A673 (cell line): ENCODE measurements at regions of chr4 and their contacts with region 1.

Region 1: DNA sequence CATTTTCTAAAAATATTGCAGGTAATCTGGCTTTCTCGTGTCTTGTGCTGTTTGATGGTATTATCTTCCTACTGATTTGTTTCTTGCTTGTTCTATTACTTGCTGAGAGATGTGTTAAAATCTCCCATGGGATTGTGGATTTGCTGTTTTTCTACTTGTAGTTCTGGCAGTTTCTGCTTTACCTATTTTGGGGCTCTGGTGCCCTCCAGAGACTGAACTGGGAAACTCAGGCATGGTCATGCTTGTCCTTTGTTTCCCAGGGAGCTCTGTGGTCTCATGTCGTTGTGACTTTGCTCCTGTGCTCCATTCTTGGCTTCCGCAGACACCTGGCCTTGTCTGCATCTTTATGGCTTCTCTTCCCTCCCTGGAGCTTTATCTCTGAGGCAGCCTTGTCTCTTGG is 39.5 kb downstream of the NSD2 start:
- DNase-seq: peak; percentile 80
- H3K4me3 ChIP-seq: no peak overlapping the region
- H3K27ac ChIP-seq: peak overlapping the region; percentile 53
- H3K4me1 ChIP-seq: peaks cover 16% of the 10 kb centered on the region
- H3K27me3 ChIP-seq: no peaks in the 10 kb centered on the region
- CTCF ChIP-seq: peak; percentile 72

Region 2: GRCh38 chr4:1928356-1929239 is 18.0 kb after region 1 on chr4:
- CTCF ChIA-PET with region 1: interaction called, 10 read pairs
- POLR2A ChIA-PET with region 1: no interaction called
- intact Hi-C with region 1: no loop called
- DNase-seq: peak; percentile 26
- H3K4me3 ChIP-seq: no peak overlapping the region
- H3K27ac ChIP-seq: peak overlapping the region; percentile 5
- H3K4me1 ChIP-seq: no peaks in the 10 kb centered on the region
- H3K27me3 ChIP-seq: no peaks in the 10 kb centered on the region
- CTCF ChIP-seq: no peak